H1 (cell line): ENCODE measurements at regions of chr5 and their contacts with region 1.

Region 1: DNA sequence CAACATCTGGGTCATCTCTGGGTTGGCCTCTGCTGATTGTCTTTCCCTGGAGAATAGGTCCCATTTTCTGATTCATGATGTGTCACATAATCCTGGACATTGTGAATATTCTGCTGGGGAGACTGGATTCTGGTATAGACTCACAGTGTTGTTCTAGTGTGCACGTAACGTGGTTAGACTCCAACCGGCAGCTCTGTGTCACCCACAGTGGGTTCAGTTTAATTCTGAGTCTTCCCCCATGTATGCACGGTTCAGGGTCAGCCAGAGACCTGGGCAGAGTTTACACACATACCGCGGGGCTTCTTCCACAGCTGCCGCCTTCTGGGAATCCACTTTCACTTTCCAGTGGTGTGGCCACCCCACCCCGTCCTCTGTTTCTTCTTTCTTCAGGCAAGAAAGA is 38.0 kb upstream of the LRRC14B start:
- DNase-seq: no peak
- H3K4me3 ChIP-seq: no peak overlapping the region
- H3K27ac ChIP-seq: no peak overlapping the region
- H3K4me1 ChIP-seq: peaks cover 0 to 2% (median 0%) of the 10 kb centered on the region in 4 experiments; a peak in 2 of 7 replicates
- H3K27me3 ChIP-seq: no peaks in the 10 kb centered on the region
- CTCF ChIP-seq: no peak
- EP300 ChIP-seq: no peak
- POLR2A ChIP-seq: no peak
- RAD21 ChIP-seq: no peak

Region 2: DNA sequence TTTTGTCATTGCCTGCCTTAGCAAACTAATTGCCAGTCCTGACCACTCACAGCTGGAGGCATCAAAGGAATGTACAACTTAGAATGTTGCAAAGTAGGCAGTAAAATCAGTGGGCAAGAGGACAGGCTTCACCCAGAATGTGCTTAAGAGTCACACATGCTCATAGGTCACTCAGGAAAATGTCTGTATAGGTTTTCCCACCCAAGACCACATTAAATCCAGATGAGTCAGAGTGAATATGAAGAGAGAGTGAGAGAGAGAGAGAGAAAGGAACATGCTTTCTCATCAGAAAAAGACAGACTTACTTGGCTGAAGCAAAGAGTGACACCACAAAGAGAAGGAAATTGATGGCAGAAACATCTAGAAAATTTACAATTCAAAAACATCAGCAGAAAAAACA is 23.4 kb before region 1 on chr5:
- CTCF ChIA-PET with region 1: no interaction called
- POLR2A ChIA-PET with region 1: no interaction called
- DNase-seq: no peak
- H3K4me3 ChIP-seq: no peak overlapping the region
- H3K27ac ChIP-seq: no peak overlapping the region; the same call in 1 of the 2 replicates
- H3K4me1 ChIP-seq: peaks cover 0 to 22% (median 9%) of the 10 kb centered on the region in 4 experiments; a peak in 4 of 7 replicates
- H3K27me3 ChIP-seq: no peaks in the 10 kb centered on the region
- CTCF ChIP-seq: no peak
- EP300 ChIP-seq: no peak
- POLR2A ChIP-seq: no peak
- RAD21 ChIP-seq: no peak

Region 3: DNA sequence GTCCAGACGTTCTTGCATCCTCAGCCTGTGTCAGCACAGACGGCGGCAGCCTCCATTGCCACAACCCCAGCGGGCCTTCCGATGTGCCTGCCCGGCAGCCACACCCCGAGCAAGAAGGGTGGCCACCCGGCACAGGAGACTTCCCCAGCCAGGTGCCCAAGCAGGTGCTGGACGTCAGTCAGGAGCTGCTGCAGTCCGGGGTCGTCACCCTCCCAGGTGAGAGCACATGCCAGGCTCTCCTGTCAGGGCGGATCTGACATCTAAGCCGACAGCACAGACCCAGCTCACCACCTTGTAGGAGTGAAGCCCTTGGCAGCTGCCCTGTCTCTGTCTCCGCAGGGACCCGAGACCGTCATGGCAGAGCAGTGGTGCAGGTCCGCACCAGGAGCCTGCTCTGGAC is 10.2 kb before region 1 on chr5:
- CTCF ChIA-PET with region 1: interaction called, 3 read pairs
- POLR2A ChIA-PET with region 1: interaction called, 15 read pairs
- DNase-seq: peak in 1 of 2 experiments; percentile 29
- H3K4me3 ChIP-seq: no peak overlapping the region
- H3K27ac ChIP-seq: no peak overlapping the region
- H3K4me1 ChIP-seq: peaks cover 0 to 5% (median under 1%) of the 10 kb centered on the region in 4 experiments; a peak in 4 of 7 replicates
- H3K27me3 ChIP-seq: no peaks in the 10 kb centered on the region
- CTCF ChIP-seq: no peak
- EP300 ChIP-seq: no peak
- POLR2A ChIP-seq: no peak
- RAD21 ChIP-seq: no peak

Region 4: GRCh38 chr5:213803-214395 is 60.6 kb after region 1 on chr5:
- CTCF ChIA-PET with region 1: no interaction called
- POLR2A ChIA-PET with region 1: no interaction called
- DNase-seq: no peak
- H3K4me3 ChIP-seq: no peak overlapping the region
- H3K27ac ChIP-seq: no peak overlapping the region
- H3K4me1 ChIP-seq: peaks cover 0 to 3% (median 0%) of the 10 kb centered on the region in 4 experiments; a peak in 1 of 7 replicates
- H3K27me3 ChIP-seq: no peaks in the 10 kb centered on the region
- CTCF ChIP-seq: no peak
- EP300 ChIP-seq: no peak
- POLR2A ChIP-seq: no peak
- RAD21 ChIP-seq: no peak

Region 5: DNA sequence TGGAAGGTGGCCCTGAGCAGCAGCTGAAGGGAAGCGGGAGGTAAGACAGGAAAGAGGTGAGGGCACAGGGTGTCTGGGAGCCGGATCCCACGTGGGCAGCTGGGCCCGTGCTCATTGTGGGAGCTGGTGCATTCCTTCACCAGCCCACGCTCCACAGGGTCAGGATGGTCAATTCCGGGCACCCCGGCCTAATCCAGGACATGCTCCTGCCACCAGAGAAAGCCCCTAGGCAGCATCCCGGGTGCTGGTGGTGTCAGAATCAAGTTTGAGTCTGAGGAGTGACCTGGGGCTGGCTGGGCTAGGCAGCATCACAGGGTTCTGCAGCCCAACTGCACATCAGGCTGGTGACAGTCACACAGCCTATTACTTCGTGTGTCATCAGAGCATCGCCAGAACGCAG is 111.1 kb after region 1 on chr5:
- CTCF ChIA-PET with region 1: no interaction called
- POLR2A ChIA-PET with region 1: no interaction called
- DNase-seq: no peak
- H3K4me3 ChIP-seq: no peak overlapping the region
- H3K27ac ChIP-seq: no peak overlapping the region
- H3K4me1 ChIP-seq: no peaks in the 10 kb centered on the region
- H3K27me3 ChIP-seq: no peaks in the 10 kb centered on the region
- CTCF ChIP-seq: no peak
- EP300 ChIP-seq: no peak
- POLR2A ChIP-seq: no peak
- RAD21 ChIP-seq: no peak

Region 6: GRCh38 chr5:305050-305449 is 151.8 kb after region 1 on chr5:
- CTCF ChIA-PET with region 1: no interaction called
- POLR2A ChIA-PET with region 1: no interaction called
- DNase-seq: no peak
- H3K4me3 ChIP-seq: no peak overlapping the region
- H3K27ac ChIP-seq: no peak overlapping the region
- H3K4me1 ChIP-seq: peaks cover 0 to 10% (median 6%) of the 10 kb centered on the region in 4 experiments; a peak in 5 of 7 replicates
- H3K27me3 ChIP-seq: no peaks in the 10 kb centered on the region
- CTCF ChIP-seq: no peak
- EP300 ChIP-seq: no peak
- POLR2A ChIP-seq: no peak
- RAD21 ChIP-seq: no peak